Ascending aorta (tissue), 2 donors: ENCODE measurements at regions of chr12 and their contacts with region 1.

Region 1: GRCh38 chr12:46661110-46661845 is 164.5 kb downstream of the SLC38A4 start:
- DNase-seq: no peak
- H3K4me3 ChIP-seq: peak overlapping the region in 1 of 2 donors; percentile 4
- H3K27ac ChIP-seq: peak overlapping the region; percentile 72 to 80
- H3K4me1 ChIP-seq: peaks cover 6 to 35% of the 10 kb centered on the region in 2 donors
- H3K27me3 ChIP-seq: no peaks in the 10 kb centered on the region
- CTCF ChIP-seq: peak; percentile 73 to 88 (median 78)

Region 2: GRCh38 chr12:46124848-46125619 is 536.2 kb before region 1 on chr12:
- intact Hi-C with region 1: loop called (anchors 5 kb)
- DNase-seq: peak in 1 of 2 donors; percentile 75
- H3K4me3 ChIP-seq: peak overlapping the region; percentile 18 to 44
- H3K27ac ChIP-seq: no peak overlapping the region
- H3K4me1 ChIP-seq: peaks cover 0 to 3% of the 10 kb centered on the region in 2 donors
- H3K27me3 ChIP-seq: no peaks in the 10 kb centered on the region
- CTCF ChIP-seq: peak; percentile 60 to 74 (median 72)

Region 3: DNA sequence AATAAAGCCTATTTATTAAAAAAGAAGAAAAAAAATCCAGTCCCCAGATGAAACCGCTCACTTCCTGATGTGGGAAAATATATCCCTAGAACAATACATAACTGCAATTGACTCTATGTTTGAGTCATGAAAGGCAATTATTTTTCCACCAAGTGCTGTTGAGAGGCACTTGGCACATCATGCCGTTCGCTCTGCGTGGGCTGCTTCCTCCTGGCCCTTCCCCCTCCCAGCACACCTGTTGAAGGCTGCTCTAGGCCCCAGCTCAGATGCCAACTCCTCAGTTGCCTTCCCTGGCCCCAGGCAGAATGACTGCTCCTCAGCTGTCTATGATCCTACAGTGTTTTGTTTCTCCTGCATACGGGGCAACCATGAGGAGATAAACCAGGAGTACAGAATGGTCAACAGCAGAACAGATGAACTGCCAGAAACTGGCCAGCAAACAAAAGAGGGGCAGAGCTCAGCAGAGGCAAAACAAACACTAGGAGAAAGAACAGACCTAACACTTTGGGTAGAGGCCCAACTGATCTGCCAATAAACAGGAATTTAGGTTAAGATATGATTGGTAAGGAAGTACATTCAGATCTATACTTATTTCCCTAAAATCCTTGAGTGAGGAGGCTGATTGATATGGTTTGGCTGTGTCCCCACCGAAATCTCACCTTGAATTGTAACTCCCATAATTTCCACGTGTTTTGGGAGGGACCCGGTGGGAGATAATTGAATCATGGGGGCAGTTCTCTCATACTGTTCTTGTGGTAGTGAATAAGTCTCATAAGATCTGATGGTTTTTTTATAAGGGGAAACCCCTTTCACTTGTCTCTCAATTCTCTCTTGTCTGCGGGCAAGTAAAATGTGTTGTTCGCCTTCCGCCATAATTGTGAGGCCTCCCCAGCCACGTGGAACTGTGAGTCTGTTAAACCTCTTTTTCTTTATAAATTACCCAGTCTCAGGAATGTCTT is 451.1 kb before region 1 on chr12:
- intact Hi-C with region 1: loop called (anchors 5 kb)
- DNase-seq: no peak
- H3K4me3 ChIP-seq: no peak overlapping the region
- H3K27ac ChIP-seq: peak overlapping the region; percentile 24 to 58
- H3K4me1 ChIP-seq: peaks cover 0 to 11% of the 10 kb centered on the region in 2 donors
- H3K27me3 ChIP-seq: no peaks in the 10 kb centered on the region
- CTCF ChIP-seq: no peak

Region 4: GRCh38 chr12:46372544-46373110 is 288.7 kb before region 1 on chr12 and contains the start of gene SLC38A2:
- intact Hi-C with region 1: loop called (anchors 2 kb)
- DNase-seq: peak; percentile 90 to 99
- H3K4me3 ChIP-seq: peak within 1 kb of the TSS; percentile 94 to 98
- H3K27ac ChIP-seq: peak within 1 kb of the TSS; percentile 97 to 98
- H3K4me1 ChIP-seq: peaks cover 4 to 15% of the 10 kb centered on the region in 2 donors
- H3K27me3 ChIP-seq: no peaks in the 10 kb centered on the region
- CTCF ChIP-seq: no peak
- total RNA-seq, gene SLC38A2: 384 TPM

Region 5: DNA sequence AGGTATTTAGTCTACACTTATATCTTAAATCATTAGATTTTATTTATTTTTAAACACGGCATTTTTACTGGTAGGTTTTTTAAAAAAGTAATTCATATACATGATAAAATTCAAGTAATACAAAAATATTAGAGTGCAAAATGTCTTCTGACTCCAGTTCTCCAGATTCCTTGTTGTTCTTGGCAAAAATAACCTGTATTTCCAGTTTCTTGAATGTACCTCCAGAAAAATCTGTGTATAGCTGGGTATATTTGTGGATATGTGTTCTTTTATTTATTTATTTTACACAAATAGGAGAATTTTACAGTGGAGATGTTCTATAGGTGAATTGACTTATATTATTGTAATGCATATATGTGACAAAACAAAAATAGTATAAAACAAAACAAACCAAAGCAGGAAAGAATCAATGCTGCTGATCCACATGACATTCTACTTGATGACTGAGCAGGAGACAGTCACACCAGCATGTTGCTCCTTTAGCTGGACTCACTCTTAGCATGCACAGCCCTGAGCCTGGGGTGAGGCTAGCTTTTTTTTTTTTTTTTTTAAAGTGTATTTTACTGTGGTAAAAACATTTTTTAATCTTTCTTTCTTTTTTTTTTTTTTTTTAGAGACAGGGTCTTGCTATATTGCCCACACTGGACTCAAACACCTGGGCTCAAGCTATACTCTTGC is 246.5 kb before region 1 on chr12:
- intact Hi-C with region 1: no loop called
- DNase-seq: no peak
- H3K4me3 ChIP-seq: no peak overlapping the region
- H3K27ac ChIP-seq: peak overlapping the region in 1 of 2 donors; percentile 17
- H3K4me1 ChIP-seq: peaks cover 3 to 18% of the 10 kb centered on the region in 2 donors
- H3K27me3 ChIP-seq: no peaks in the 10 kb centered on the region
- CTCF ChIP-seq: no peak

Region 6: DNA sequence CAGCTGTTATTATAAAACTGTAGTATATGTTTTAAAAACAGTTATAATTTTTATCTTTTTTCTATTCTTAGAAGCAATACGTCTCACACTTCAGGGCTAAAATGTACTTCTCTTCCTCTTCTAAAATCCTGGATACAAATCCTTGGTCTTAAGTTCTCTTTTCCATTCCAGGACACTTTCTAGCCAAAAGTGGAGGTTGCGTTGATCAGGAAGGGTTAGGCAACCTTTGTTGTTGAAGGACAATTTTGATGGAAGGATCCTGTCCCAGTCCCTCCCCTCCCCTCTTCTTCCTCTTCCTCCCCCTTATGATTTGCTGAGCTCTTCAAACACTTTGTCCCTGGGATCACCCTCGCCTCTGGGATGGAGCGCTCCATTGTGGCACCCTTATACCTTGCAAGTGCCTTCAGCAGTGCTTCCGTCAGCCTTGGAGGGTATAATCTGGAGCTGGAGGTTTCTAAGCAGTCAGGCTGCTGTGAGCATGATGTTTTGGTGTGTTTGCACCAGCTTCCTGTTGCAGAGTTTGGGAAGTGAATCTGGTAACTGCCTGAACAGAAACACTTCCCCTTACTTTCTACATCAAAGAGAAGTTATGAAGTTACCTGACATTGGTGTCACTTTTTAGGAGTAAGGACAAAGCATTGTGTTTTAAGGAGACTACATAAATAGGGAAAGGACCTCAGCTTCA is 201.3 kb before region 1 on chr12:
- intact Hi-C with region 1: no loop called
- DNase-seq: no peak
- H3K4me3 ChIP-seq: no peak overlapping the region
- H3K27ac ChIP-seq: peak overlapping the region; percentile 76 to 81
- H3K4me1 ChIP-seq: peaks cover 0 to 40% of the 10 kb centered on the region in 2 donors
- H3K27me3 ChIP-seq: no peaks in the 10 kb centered on the region
- CTCF ChIP-seq: no peak

Region 7: DNA sequence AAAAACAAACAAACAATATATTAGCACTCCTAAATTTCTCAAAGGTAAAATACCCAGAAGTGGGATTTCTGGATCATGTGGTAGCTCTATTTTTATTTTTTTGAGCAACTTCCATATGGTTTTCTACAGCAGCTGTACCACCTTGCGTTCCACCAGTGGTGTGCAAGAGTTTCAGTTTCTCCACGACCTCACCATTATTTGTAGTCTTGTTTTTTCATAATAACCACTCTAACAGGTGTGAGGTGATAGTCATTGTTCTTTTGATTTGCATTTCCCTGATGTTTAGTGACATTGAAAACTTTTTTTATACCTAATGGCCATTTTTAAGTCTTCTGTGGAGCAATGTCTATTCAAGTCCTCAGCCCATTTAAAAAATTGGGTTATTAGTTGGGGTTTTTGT is 161.4 kb before region 1 on chr12:
- intact Hi-C with region 1: no loop called
- DNase-seq: no peak
- H3K4me3 ChIP-seq: no peak overlapping the region
- H3K27ac ChIP-seq: no peak overlapping the region
- H3K4me1 ChIP-seq: no peaks in the 10 kb centered on the region
- H3K27me3 ChIP-seq: no peaks in the 10 kb centered on the region
- CTCF ChIP-seq: no peak

Region 8: DNA sequence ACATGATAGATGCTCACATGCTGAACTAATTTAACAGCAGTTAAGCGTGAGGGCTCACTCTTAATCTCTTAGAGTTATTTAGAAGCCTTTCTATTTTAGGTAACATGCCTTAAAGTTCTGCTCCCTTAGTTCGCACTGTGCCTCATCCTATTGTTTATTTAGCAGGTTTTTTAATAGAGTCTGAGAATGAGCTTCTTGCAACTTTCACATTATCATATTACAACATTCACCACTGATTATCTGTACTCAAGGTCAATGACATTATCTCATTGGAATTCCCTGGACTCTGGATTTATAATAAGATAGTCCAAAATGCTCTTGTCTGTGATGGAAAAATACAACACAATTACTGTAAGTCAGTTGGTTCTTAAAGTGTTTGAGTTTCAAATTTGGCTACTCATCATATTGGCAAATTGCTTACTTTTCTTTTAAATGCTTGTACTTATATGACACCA is 105.1 kb before region 1 on chr12:
- intact Hi-C with region 1: loop called (anchors 5 kb)
- DNase-seq: no peak
- H3K4me3 ChIP-seq: peak overlapping the region in 1 of 2 donors; percentile 7
- H3K27ac ChIP-seq: peak overlapping the region in 1 of 2 donors; percentile 6
- H3K4me1 ChIP-seq: peaks cover 0 to 20% of the 10 kb centered on the region in 2 donors
- H3K27me3 ChIP-seq: no peaks in the 10 kb centered on the region
- CTCF ChIP-seq: no peak